ENCODE measurements at regions of chr6 and their contacts with region 1.

Region 1: GRCh38 chr6:36027501-36028087 is at the start of gene MAPK14:
- DNase-seq: peak; percentile 98 to 100 (median 100)
- H3K4me3 ChIP-seq: peak within 1 kb of the TSS; percentile 67 to 97
- H3K4me3 Mint-ChIP-seq: peak within 1 kb of the TSS; percentile 93 to 97 (median 95)
- H3K27ac ChIP-seq: peak within 1 kb of the TSS; percentile 78
- H3K27ac Mint-ChIP-seq: peak within 1 kb of the TSS; percentile 89 to 96 (median 94)
- H3K4me1 ChIP-seq: peaks cover 40% of the 10 kb centered on the region
- H3K4me1 Mint-ChIP-seq: peaks cover 22 to 46% (median 33%) of the 10 kb centered on the region in 4 donors
- H3K27me3 ChIP-seq: no peaks in the 10 kb centered on the region
- H3K27me3 Mint-ChIP-seq: peaks cover 13 to 16% of the 10 kb centered on the region in 2 donors
- total RNA-seq, gene MAPK14: 58.9 to 64.3 TPM

Region 2: GRCh38 chr6:36052097-36052496 is 24.5 kb after region 1 on chr6:
- CTCF ChIA-PET with region 1: interaction called, 3 read pairs
- POLR2A ChIA-PET with region 1: interaction called, 13 read pairs
- intact Hi-C with region 1: no loop called
- DNase-seq: no peak
- H3K4me3 ChIP-seq: no peak overlapping the region
- H3K4me3 Mint-ChIP-seq: no peak overlapping the region
- H3K27ac ChIP-seq: no peak overlapping the region
- H3K27ac Mint-ChIP-seq: no peak overlapping the region
- H3K4me1 ChIP-seq: peaks cover 33% of the 10 kb centered on the region
- H3K4me1 Mint-ChIP-seq: peaks cover 5 to 21% (median 13%) of the 10 kb centered on the region in 4 donors
- H3K27me3 ChIP-seq: no peaks in the 10 kb centered on the region
- H3K27me3 Mint-ChIP-seq: no peaks in the 10 kb centered on the region

Region 3: DNA sequence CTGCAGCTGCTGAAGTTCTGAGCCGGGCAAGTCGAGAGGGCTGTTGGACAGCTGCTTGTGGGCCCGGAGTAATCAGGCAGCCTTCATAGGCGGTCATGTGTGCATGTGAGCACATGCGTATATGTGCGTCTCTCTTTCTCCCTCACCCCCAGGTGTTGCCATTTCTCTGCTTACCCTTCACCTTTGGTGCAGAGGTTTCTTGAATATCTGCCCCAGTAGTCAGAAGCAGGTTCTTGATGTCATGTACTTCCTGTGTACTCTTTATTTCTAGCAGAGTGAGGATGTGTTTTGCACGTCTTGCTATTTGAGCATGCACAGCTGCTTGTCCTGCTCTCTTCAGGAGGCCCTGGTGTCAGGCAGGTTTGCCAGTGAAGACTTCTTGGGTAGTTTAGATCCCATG is 81.5 kb after region 1 on chr6:
- CTCF ChIA-PET with region 1: interaction called, 15 read pairs
- POLR2A ChIA-PET with region 1: interaction called, 4 read pairs
- intact Hi-C with region 1: no loop called
- DNase-seq: peak; percentile 59 to 72 (median 61)
- H3K4me3 ChIP-seq: no peak overlapping the region
- H3K4me3 Mint-ChIP-seq: peak overlapping the region in 7 of 8 donors; percentile 7 to 57 (median 51)
- H3K27ac ChIP-seq: peak overlapping the region; percentile 22
- H3K27ac Mint-ChIP-seq: peak overlapping the region; percentile 80 to 95 (median 91)
- H3K4me1 ChIP-seq: peaks cover 40% of the 10 kb centered on the region
- H3K4me1 Mint-ChIP-seq: peaks cover 26 to 48% (median 36%) of the 10 kb centered on the region in 4 donors
- H3K27me3 ChIP-seq: no peaks in the 10 kb centered on the region
- H3K27me3 Mint-ChIP-seq: no peaks in the 10 kb centered on the region

Region 4: DNA sequence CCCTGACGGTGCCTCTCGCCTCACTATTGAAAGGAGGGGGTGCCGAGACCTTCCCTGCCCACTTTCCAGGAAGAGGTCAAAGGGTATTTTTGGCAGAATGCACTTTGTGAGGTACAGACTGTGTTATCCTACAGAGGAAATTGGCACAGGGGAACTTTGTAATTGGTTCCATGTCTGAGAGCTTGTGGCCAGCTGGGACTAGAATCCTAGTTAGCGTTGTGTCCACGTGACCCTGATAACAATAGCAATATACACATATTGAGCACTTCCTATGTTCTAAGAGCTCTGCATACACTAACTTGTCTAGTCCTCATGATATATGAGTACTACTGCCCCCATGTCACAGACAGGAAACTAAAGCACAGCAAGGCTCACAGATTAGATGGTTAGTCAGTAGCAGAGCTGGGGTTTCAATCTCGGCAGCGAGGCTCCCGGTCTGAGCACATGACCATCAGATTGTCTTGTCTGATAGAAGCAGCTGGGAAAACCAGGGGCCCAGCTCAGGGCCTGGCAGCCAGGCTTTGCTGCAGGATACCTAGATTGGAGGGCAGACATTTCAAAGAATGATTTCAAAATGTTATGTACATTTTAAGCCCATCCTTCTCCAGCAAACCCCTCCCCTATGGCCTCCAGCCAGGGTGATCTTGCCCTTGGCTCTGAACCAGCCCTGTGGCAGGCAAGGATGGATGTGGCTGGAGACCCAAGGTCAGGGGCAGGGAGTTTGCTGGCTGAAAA is 104.1 kb after region 1 on chr6:
- CTCF ChIA-PET with region 1: interaction called, 7 read pairs
- POLR2A ChIA-PET with region 1: interaction called, 41 read pairs
- intact Hi-C with region 1: no loop called
- DNase-seq: peak; percentile 43 to 79 (median 48)
- H3K4me3 ChIP-seq: peak overlapping the region; percentile 58 to 85
- H3K4me3 Mint-ChIP-seq: peak overlapping the region; percentile 87 to 91 (median 88)
- H3K27ac ChIP-seq: peak overlapping the region; percentile 86
- H3K27ac Mint-ChIP-seq: peak overlapping the region; percentile 88 to 93 (median 91)
- H3K4me1 ChIP-seq: peaks cover 52% of the 10 kb centered on the region
- H3K4me1 Mint-ChIP-seq: peaks cover 33 to 50% (median 43%) of the 10 kb centered on the region in 4 donors
- H3K27me3 ChIP-seq: no peaks in the 10 kb centered on the region
- H3K27me3 Mint-ChIP-seq: no peaks in the 10 kb centered on the region

Region 5: DNA sequence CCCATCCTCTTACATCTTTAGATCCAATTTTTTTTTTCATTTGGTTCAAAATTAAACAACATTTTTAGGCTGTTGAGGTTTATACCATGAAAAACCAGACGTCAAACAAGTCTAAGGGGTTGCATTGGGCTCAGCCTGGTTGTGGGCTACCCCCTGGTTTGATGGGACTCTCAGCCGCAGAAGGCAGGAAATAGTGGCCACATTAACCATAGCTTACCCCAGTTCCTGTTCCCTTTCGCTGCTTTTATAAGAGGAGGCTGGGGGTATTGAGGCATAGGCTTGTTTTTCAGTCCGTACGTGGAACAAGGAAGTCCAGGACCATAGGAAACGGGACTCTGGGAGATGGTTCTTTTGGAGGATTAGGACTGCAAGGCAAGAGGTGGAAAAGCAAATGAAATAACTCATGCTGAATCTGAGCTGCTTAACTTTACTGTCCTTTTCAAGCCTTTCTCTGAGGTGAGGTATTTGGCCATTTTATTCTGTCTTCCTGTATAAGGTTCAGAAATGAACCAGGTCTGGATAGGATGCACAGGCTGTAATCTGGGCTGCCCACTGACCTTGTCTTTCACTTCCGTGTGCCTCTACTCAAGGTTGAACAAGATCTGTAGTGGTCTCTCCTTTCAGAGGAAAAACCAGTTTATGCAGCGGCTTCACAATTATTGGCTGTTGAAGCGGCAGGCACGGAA is 176.6 kb after region 1 on chr6:
- CTCF ChIA-PET with region 1: interaction called, 6 read pairs
- POLR2A ChIA-PET with region 1: interaction called, 11 read pairs
- intact Hi-C with region 1: no loop called
- DNase-seq: peak; percentile 71 to 81 (median 77)
- H3K4me3 ChIP-seq: peak overlapping the region in 1 of 2 donors; percentile 11
- H3K4me3 Mint-ChIP-seq: peak overlapping the region; percentile 48 to 86 (median 76)
- H3K27ac ChIP-seq: no peak overlapping the region
- H3K27ac Mint-ChIP-seq: peak overlapping the region; percentile 41 to 93 (median 75)
- H3K4me1 ChIP-seq: peaks cover 53% of the 10 kb centered on the region
- H3K4me1 Mint-ChIP-seq: peaks cover 50 to 73% (median 61%) of the 10 kb centered on the region in 4 donors
- H3K27me3 ChIP-seq: no peaks in the 10 kb centered on the region
- H3K27me3 Mint-ChIP-seq: no peaks in the 10 kb centered on the region

Region 6: GRCh38 chr6:36360241-36361054 is 332.9 kb after region 1 on chr6:
- CTCF ChIA-PET with region 1: interaction called, 8 read pairs
- POLR2A ChIA-PET with region 1: interaction called, 4 read pairs
- intact Hi-C with region 1: loop called (anchors 1 kb)
- DNase-seq: peak; percentile 63 to 73 (median 69)
- H3K4me3 ChIP-seq: no peak overlapping the region
- H3K4me3 Mint-ChIP-seq: peak overlapping the region in 1 of 8 donors; percentile 36
- H3K27ac ChIP-seq: no peak overlapping the region
- H3K27ac Mint-ChIP-seq: no peak overlapping the region
- H3K4me1 ChIP-seq: peaks cover 7% of the 10 kb centered on the region
- H3K4me1 Mint-ChIP-seq: peaks cover 2 to 9% (median 5%) of the 10 kb centered on the region in 4 donors
- H3K27me3 ChIP-seq: no peaks in the 10 kb centered on the region
- H3K27me3 Mint-ChIP-seq: peaks cover 0 to 3% of the 10 kb centered on the region in 2 donors

Measured in CD4-positive, alpha-beta memory T cell (primary cell).